PC-9 (cell line): ENCODE measurements at regions of chr4 and their contacts with region 1.

Region 1: GRCh38 chr4:52983563-52984303 is 121.6 kb downstream of the RASL11B start:
- DNase-seq: peak; percentile 5 to 36
- H3K4me3 ChIP-seq: no peak overlapping the region
- H3K27ac ChIP-seq: no peak overlapping the region
- H3K4me1 ChIP-seq: peaks cover 6% of the 10 kb centered on the region; the same call in 1 of the 2 replicates
- H3K27me3 ChIP-seq: no peaks in the 10 kb centered on the region
- CTCF ChIP-seq: peak; percentile 79

Region 2: GRCh38 chr4:52545099-52546069 is 438.3 kb before region 1 on chr4:
- CTCF ChIA-PET with region 1: interaction called, 5 read pairs
- POLR2A ChIA-PET with region 1: no interaction called
- intact Hi-C with region 1: loop called (anchors 5 kb)
- DNase-seq: peak in 1 of 2 experiments; percentile 63
- H3K4me3 ChIP-seq: no peak overlapping the region
- H3K27ac ChIP-seq: no peak overlapping the region
- H3K4me1 ChIP-seq: no peaks in the 10 kb centered on the region
- H3K27me3 ChIP-seq: no peaks in the 10 kb centered on the region
- CTCF ChIP-seq: peak; percentile 89

Region 3: GRCh38 chr4:52659001-52659721 is 324.6 kb before region 1 on chr4 and contains the start of gene USP46:
- CTCF ChIA-PET with region 1: no interaction called
- POLR2A ChIA-PET with region 1: no interaction called
- intact Hi-C with region 1: loop called (anchors 5 kb)
- DNase-seq: peak in 1 of 2 experiments; percentile 69
- H3K4me3 ChIP-seq: peak within 1 kb of the TSS; percentile 92
- H3K27ac ChIP-seq: peak within 1 kb of the TSS; percentile 43; the same call in 1 of the 2 replicates
- H3K4me1 ChIP-seq: peaks cover 37% of the 10 kb centered on the region
- H3K27me3 ChIP-seq: no peaks in the 10 kb centered on the region
- CTCF ChIP-seq: no peak
- total RNA-seq, gene USP46: 13.8 and 17.1 TPM in 2 replicates

Region 4: DNA sequence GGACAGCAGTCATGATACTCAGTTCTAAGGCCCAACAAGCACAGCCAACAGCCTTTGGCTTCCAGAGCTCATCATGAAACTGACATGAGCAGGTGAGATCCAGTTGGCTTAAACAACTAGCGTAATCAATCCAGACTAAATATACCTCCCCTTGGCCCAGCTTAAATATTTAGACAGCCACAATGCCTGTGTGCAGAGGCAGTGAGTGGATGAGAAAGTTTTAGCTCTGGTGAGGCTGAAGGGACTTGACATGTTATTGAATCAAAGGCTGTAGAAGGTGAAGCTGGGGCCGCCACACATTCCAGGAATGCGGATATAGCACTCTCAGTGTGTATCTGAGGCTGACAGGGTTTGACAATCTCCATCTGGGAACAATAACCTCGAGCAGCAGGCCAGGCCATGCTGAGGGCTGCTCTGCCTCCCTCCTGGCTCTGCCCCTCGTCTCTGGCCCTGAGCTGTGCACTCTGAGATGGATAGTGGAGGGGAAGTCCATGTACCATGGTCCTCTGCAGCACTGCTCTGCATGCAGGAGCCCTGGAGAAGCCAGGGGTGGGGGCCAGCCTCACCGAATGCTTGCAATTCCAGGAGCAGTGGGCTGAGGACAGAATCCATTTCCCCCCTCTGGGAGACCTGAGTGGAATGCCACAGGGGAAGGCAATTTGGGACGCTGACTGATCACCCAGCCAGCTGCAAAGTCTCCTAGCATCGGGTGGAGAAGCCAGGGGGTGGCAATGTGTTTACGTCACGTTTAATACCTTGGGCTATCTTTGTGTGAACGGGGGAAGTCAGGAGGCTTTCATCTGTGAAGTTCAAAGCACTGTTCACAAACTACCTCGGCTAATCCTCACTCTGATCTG is 158.9 kb before region 1 on chr4:
- CTCF ChIA-PET with region 1: no interaction called
- POLR2A ChIA-PET with region 1: no interaction called
- intact Hi-C with region 1: no loop called
- DNase-seq: no peak
- H3K4me3 ChIP-seq: no peak overlapping the region
- H3K27ac ChIP-seq: no peak overlapping the region
- H3K4me1 ChIP-seq: peaks cover 19% of the 10 kb centered on the region
- H3K27me3 ChIP-seq: no peaks in the 10 kb centered on the region
- CTCF ChIP-seq: no peak

Region 5: DNA sequence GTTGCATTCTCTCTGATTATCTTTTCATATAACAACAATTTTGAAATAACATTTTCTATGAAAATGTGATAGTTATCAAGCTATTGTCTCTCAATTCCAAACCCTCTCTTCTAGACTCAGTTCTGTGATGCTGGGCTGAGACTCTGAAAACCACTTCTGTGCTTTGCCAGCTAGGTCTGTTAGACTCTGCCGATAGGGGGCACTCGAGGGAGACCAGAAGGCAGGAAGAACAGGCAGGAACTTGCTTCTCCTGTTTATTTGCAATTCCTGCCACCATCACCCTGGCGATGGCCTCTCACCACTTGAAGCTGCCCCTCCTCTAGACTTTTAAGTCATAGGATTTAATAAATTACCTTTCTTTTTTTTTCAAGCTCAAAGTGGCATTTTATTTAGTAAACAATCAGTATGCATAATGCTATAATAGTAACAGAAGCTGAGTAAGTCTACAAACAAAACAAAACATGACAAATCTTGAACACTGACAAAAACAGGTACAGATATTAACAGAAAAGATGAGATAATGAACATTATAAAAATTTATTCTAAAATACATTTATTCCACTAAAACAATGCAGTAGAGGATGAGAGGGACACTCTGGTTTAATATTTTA is 71.9 kb before region 1 on chr4:
- CTCF ChIA-PET with region 1: interaction called, 3 read pairs
- POLR2A ChIA-PET with region 1: no interaction called
- intact Hi-C with region 1: loop called (anchors 2 kb)
- DNase-seq: peak; percentile 59 to 71
- H3K4me3 ChIP-seq: no peak overlapping the region
- H3K27ac ChIP-seq: no peak overlapping the region
- H3K4me1 ChIP-seq: peaks cover 44% of the 10 kb centered on the region
- H3K27me3 ChIP-seq: no peaks in the 10 kb centered on the region
- CTCF ChIP-seq: peak; percentile 80

Region 6: GRCh38 chr4:52968691-52969090 is 15.0 kb before region 1 on chr4:
- CTCF ChIA-PET with region 1: no interaction called
- POLR2A ChIA-PET with region 1: no interaction called
- intact Hi-C with region 1: no loop called
- DNase-seq: no peak
- H3K4me3 ChIP-seq: no peak overlapping the region
- H3K27ac ChIP-seq: no peak overlapping the region
- H3K4me1 ChIP-seq: no peaks in the 10 kb centered on the region
- H3K27me3 ChIP-seq: no peaks in the 10 kb centered on the region
- CTCF ChIP-seq: no peak

Region 7: GRCh38 chr4:53196882-53197771 is 213.4 kb after region 1 on chr4:
- CTCF ChIA-PET with region 1: no interaction called
- POLR2A ChIA-PET with region 1: no interaction called
- intact Hi-C with region 1: no loop called
- DNase-seq: no peak
- H3K4me3 ChIP-seq: no peak overlapping the region
- H3K27ac ChIP-seq: no peak overlapping the region
- H3K4me1 ChIP-seq: no peaks in the 10 kb centered on the region
- H3K27me3 ChIP-seq: no peaks in the 10 kb centered on the region
- CTCF ChIP-seq: peak; percentile 88

Region 8: GRCh38 chr4:53586121-53586816 is 602.5 kb after region 1 on chr4:
- CTCF ChIA-PET with region 1: no interaction called
- POLR2A ChIA-PET with region 1: no interaction called
- intact Hi-C with region 1: no loop called
- DNase-seq: no peak
- H3K4me3 ChIP-seq: no peak overlapping the region
- H3K27ac ChIP-seq: no peak overlapping the region
- H3K4me1 ChIP-seq: peaks cover 5% of the 10 kb centered on the region
- H3K27me3 ChIP-seq: no peaks in the 10 kb centered on the region
- CTCF ChIP-seq: no peak